ENCODE measurements at regions of chr6 and their contacts with region 1.

Region 1: DNA sequence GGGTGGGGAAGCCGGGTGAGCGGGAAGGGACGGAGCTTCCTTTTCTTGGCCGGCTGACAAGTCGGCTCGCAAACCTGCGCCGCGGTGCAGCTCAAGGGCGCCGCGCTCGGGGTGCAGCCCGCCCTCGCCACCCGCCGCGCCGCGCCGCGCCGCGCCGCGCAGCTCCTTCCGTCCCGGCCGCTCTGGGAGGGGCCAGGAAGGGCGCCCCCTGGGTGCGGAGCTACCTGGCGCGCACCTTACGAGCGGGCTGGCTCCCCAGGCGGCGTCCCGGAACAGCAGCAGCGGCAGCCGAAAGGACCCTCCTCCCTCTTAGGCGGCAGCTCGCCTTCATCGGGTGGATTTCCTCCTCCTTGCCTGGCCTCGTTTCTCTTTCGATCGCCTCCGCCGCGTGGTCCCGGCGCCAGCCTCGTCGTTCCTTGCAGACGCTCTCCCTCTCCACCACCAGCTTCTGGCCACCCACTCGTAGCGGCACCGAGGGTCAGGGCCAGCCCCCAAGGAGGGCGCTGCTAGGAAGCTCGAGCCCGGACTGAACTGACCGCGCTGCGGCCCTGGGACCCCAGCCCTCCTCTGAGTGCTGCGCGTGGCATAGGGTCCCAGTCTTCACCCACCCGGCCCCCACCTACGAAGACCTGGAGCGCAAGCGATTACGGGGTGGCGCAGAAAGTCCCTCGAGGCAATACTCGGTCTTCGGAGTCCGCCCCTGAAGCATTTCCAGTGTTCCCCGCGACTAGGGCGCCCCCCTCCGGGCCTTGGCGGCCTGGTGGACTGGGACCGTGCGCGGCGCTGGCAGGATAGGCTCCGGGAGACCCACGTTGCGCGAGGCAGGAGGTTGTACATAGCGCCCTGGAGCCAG is at the start of gene MAP3K5:
- DNase-seq: peak; percentile 83 to 98 (median 90)

Region 2: DNA sequence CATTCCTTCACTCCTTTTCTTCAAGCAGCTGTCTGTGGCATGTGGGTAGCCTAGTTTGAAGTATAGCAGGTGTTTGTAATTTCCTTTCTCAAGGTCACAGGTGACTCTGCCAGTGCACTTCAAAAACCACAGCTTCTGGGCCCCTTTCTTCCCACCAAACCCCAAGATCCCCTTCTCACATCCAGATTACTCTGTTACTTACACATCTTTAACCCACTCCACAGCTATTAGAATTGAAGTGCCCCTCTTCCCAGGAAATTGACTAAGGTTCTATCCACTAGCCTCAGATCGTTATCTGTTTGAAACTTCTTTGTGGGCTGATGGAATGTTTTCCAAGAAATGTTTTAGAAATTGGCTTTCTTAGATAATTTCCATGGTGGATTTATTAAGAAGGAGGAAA is 1445.9 kb before region 1 on chr6:
- intact Hi-C with region 1: no loop called
- DNase-seq: no peak

Region 3: DNA sequence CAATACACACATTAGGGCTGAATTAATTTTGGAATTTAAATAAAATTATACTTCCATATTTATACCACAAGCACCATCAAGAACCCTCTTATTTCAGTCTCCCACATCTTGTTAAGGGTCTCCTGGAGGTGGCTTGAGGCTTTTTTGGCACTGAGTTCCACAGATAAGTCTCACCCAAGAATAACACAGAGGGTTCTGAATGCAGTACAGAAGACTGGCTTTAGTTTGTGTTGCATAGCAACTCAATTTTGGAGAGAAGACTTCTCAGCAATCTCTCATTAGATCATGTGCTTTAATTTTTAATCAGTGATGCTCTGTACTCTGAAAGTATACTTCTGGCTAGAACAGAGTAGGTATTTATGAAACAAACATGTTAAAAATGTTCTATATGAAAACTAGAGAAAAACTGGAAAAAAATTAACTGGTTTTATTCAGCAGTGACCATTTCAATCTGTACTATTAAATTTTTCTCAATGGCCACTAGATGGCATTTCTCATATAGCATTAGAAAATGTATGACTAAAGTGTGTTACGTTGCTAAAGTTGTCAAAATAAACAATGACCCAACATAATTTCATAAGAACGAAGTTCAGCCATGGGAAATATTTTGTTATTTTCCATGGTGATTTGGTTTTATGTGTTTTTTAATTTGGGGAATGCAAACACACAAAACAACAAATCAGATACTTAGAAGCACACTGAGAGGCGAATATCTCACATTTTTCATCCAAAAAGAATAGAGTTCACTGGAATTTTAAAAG is 209.7 kb before region 1 on chr6:
- intact Hi-C with region 1: loop called (anchors 2 kb)
- DNase-seq: no peak

Region 4: DNA sequence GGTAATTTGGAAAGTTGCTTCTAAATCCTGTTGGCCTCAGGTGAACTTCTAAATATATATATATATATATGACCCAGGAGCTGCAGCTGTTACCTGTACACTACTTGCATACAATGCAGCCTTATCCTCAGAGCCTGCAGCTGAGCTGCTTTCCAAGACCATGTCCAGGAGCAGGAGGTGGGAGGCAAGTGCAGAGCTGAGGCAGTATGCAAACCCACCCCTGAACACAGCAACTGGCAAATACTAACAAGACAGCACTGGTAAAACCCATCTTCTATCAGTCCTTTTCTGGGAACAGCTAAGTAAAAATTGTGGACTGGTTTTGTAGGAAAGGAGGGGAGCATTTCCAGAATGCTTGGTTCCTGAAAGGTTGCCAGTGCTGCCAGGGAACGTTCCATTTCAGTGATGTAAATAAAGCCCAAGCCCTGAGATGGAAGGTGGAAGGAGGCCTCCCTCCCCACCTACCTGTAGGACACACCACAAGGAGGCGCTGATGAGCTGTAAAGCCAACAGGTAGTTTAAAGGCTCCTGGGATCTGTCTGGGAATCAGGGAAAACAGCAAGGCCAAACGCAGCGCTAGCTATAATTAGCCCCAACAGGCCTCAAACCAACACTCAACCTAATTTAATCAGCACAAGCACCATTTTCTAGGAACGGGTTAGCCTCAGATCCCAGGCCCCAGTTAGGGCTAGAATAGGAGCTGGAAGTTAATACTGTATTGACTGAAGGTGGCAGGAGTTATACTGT is 148.6 kb before region 1 on chr6:
- intact Hi-C with region 1: loop called (anchors 1 kb)
- DNase-seq: peak; percentile 41 to 95 (median 76)